H1 (cell line): ENCODE measurements at regions of chr11 and their contacts with region 1.

Region 1: DNA sequence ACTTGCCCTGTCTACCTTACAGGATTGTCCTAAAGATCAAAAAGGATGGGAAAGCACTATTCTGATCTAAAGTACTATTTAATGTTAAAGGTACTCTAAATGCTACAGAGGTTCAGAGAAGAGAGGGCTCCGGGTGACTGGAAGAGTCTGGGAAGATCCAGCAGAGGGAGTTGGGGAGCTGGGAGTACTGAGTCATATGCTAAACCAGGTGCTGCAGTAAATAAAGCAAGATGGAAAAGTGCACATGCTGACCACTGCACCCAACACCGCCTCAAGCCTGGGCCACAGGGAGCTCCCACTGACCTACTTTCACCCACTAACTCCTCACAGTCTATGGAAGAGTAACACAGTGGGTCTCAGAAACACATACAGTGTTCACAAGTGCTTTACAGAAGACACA is 49.3 kb downstream of the WT1 start:
- DNase-seq: peak in 1 of 2 experiments; percentile 21
- H3K4me3 ChIP-seq: no peak overlapping the region
- H3K27ac ChIP-seq: no peak overlapping the region
- H3K4me1 ChIP-seq: peaks cover 0 to 2% (median 0%) of the 10 kb centered on the region in 4 experiments; a peak in 1 of 7 replicates
- H3K27me3 ChIP-seq: peaks cover 0 to 3% (median 0%) of the 10 kb centered on the region in 4 experiments; a peak in 2 of 7 replicates
- CTCF ChIP-seq: peak; percentile 49 to 72 (median 70)
- EP300 ChIP-seq: no peak
- POLR2A ChIP-seq: no peak
- RAD21 ChIP-seq: peak; percentile 66 to 74

Region 2: GRCh38 chr11:32279672-32280071 is 106.3 kb before region 1 on chr11:
- CTCF ChIA-PET with region 1: no interaction called
- POLR2A ChIA-PET with region 1: no interaction called
- DNase-seq: no peak
- H3K4me3 ChIP-seq: no peak overlapping the region
- H3K27ac ChIP-seq: no peak overlapping the region
- H3K4me1 ChIP-seq: no peaks in the 10 kb centered on the region
- H3K27me3 ChIP-seq: no peaks in the 10 kb centered on the region
- CTCF ChIP-seq: peak in 2 of 3 experiments; percentile 17 to 47; a peak in 2 of 4 replicates
- EP300 ChIP-seq: no peak
- POLR2A ChIP-seq: no peak
- RAD21 ChIP-seq: 0 out of 4 replicates have a peak, but pooled peaks of 1 of the 2 experiments have one; percentile 7

Region 3: GRCh38 chr11:32333320-32333991 is 52.5 kb before region 1 on chr11:
- CTCF ChIA-PET with region 1: interaction called, 17 read pairs
- POLR2A ChIA-PET with region 1: no interaction called
- DNase-seq: peak; percentile 38 to 84
- H3K4me3 ChIP-seq: peak overlapping the region; percentile 40 to 65 (median 54)
- H3K27ac ChIP-seq: no peak overlapping the region
- H3K4me1 ChIP-seq: peaks cover 2 to 7% (median 5%) of the 10 kb centered on the region in 4 experiments; a peak in 3 of 7 replicates
- H3K27me3 ChIP-seq: peaks cover 0 to 28% (median 19%) of the 10 kb centered on the region in 4 experiments; a peak in 6 of 7 replicates
- CTCF ChIP-seq: peak; percentile 25 to 45 (median 40)
- EP300 ChIP-seq: no peak
- POLR2A ChIP-seq: 0 out of 3 replicates have a peak, but pooled peaks of 1 of the 2 experiments have one; percentile 25
- RAD21 ChIP-seq: peak in 1 of 2 experiments; percentile 31; a peak in 1 of 4 replicates

Region 4: GRCh38 chr11:32348502-32348901 is 37.5 kb before region 1 on chr11:
- CTCF ChIA-PET with region 1: no interaction called
- POLR2A ChIA-PET with region 1: no interaction called
- DNase-seq: no peak
- H3K4me3 ChIP-seq: no peak overlapping the region
- H3K27ac ChIP-seq: no peak overlapping the region
- H3K4me1 ChIP-seq: no peaks in the 10 kb centered on the region
- H3K27me3 ChIP-seq: no peaks in the 10 kb centered on the region
- CTCF ChIP-seq: no peak
- EP300 ChIP-seq: no peak
- POLR2A ChIP-seq: no peak
- RAD21 ChIP-seq: no peak

Region 5: GRCh38 chr11:32374261-32374711 is 11.7 kb before region 1 on chr11:
- CTCF ChIA-PET with region 1: interaction called, 21 read pairs
- POLR2A ChIA-PET with region 1: no interaction called
- DNase-seq: peak; percentile 46 to 89
- H3K4me3 ChIP-seq: no peak overlapping the region
- H3K27ac ChIP-seq: no peak overlapping the region
- H3K4me1 ChIP-seq: no peaks in the 10 kb centered on the region
- H3K27me3 ChIP-seq: no peaks in the 10 kb centered on the region
- CTCF ChIP-seq: peak; percentile 76 to 95 (median 77)
- EP300 ChIP-seq: no peak
- POLR2A ChIP-seq: no peak
- RAD21 ChIP-seq: peak; percentile 74 to 81

Region 6: DNA sequence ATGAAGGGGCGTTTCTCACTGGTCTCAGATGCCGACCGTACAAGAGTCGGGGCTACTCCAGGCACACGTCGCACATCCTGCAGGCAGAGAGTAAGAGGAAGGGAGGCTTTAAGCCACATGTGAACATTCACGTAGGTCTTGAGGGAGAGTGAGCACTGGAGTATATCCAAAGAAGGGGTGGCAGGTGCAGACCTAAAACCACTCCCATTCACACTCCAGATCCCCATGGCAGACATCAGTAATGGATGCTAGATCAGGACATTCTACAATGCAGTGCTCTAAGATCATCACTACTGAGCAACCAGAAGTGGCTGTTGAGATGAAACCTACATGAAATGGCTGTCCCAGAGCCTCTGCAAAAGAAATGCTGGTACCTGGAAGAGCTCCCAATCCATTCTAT is 10.3 kb after region 1 on chr11:
- CTCF ChIA-PET with region 1: interaction called, 42 read pairs
- POLR2A ChIA-PET with region 1: interaction called, 3 read pairs
- DNase-seq: no peak
- H3K4me3 ChIP-seq: no peak overlapping the region
- H3K27ac ChIP-seq: no peak overlapping the region
- H3K4me1 ChIP-seq: no peaks in the 10 kb centered on the region; a peak in 2 of 7 replicates
- H3K27me3 ChIP-seq: no peaks in the 10 kb centered on the region
- CTCF ChIP-seq: no peak
- EP300 ChIP-seq: no peak
- POLR2A ChIP-seq: no peak
- RAD21 ChIP-seq: no peak

Region 7: GRCh38 chr11:32414925-32415324 is 28.9 kb after region 1 on chr11:
- CTCF ChIA-PET with region 1: interaction called, 10 read pairs
- POLR2A ChIA-PET with region 1: no interaction called
- DNase-seq: no peak
- H3K4me3 ChIP-seq: no peak overlapping the region
- H3K27ac ChIP-seq: no peak overlapping the region
- H3K4me1 ChIP-seq: peaks cover 0 to 7% (median 0%) of the 10 kb centered on the region in 4 experiments; a peak in 2 of 7 replicates
- H3K27me3 ChIP-seq: no peaks in the 10 kb centered on the region
- CTCF ChIP-seq: no peak
- EP300 ChIP-seq: no peak
- POLR2A ChIP-seq: no peak
- RAD21 ChIP-seq: no peak

Region 8: GRCh38 chr11:32426819-32427615 is 41.0 kb after region 1 on chr11:
- CTCF ChIA-PET with region 1: interaction called, 19 read pairs
- POLR2A ChIA-PET with region 1: no interaction called
- DNase-seq: peak in 1 of 2 experiments; percentile 77
- H3K4me3 ChIP-seq: peak overlapping the region; percentile 27 to 57 (median 28)
- H3K27ac ChIP-seq: no peak overlapping the region
- H3K4me1 ChIP-seq: peaks cover 0 to 26% (median 11%) of the 10 kb centered on the region in 4 experiments; a peak in 6 of 7 replicates
- H3K27me3 ChIP-seq: peaks cover 62 to 81% (median 75%) of the 10 kb centered on the region in 4 experiments
- CTCF ChIP-seq: no peak
- EP300 ChIP-seq: no peak
- POLR2A ChIP-seq: no peak
- RAD21 ChIP-seq: no peak

Region 9: DNA sequence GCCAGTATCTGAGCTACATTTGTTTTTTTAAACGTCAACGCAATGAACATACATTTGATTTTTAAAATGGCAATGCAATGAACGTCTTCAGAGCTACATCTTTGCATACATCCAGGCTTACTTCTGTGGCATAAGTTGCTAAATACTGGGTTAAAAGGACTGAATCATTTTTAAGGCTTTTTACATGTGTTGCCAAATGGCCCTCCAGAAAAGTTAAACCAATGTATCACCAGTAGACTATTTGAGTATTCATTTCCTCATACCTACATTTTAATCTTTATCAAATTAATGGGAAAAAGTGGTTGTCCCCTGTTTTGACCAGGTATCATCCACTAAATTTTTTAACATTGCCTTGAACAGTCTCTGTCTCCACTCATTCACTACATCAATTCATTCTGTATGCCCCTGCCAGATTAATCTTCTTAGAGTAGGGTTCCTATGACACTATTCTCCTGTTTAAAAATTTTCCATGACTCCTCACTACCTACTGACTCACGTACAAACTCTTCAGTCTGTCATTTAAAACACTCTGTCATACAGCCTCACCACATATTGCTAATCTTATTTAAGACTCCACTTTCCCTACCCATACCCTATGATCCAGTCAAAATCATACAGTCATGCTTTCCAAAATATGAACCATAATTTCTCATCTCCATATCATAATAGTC is 431.3 kb after region 1 on chr11:
- CTCF ChIA-PET with region 1: no interaction called
- POLR2A ChIA-PET with region 1: no interaction called
- DNase-seq: no peak
- H3K4me3 ChIP-seq: no peak overlapping the region
- H3K27ac ChIP-seq: no peak overlapping the region
- H3K4me1 ChIP-seq: no peaks in the 10 kb centered on the region
- H3K27me3 ChIP-seq: no peaks in the 10 kb centered on the region
- CTCF ChIP-seq: no peak
- EP300 ChIP-seq: no peak
- POLR2A ChIP-seq: no peak
- RAD21 ChIP-seq: no peak